ENCODE measurements at regions of chr3 and their contacts with region 1.

Region 1: GRCh38 chr3:46488735-46489361 is 8.9 kb upstream of the RTP3 start:
- DNase-seq: peak; percentile 90
- H3K4me3 ChIP-seq: no peak overlapping the region
- H3K27ac ChIP-seq: no peak overlapping the region
- H3K4me1 ChIP-seq: peaks cover 0 to 8% (median 5%) of the 10 kb centered on the region in 4 donors
- H3K27me3 ChIP-seq: no peaks in the 10 kb centered on the region
- CTCF ChIP-seq: peak; percentile 82 to 98 (median 95)
- EP300 ChIP-seq: no peak
- POLR2A ChIP-seq: no peak

Region 2: GRCh38 chr3:45986303-45986982 is 502.4 kb before region 1 on chr3:
- intact Hi-C with region 1: no loop called
- DNase-seq: peak; percentile 85
- H3K4me3 ChIP-seq: no peak overlapping the region
- H3K27ac ChIP-seq: peak overlapping the region; percentile 84 to 98 (median 95)
- H3K4me1 ChIP-seq: peaks cover 0 to 88% (median 82%) of the 10 kb centered on the region in 4 donors
- H3K27me3 ChIP-seq: no peaks in the 10 kb centered on the region
- CTCF ChIP-seq: no peak
- EP300 ChIP-seq: peak in 1 of 4 donors; percentile 66
- POLR2A ChIP-seq: no peak

Region 3: GRCh38 chr3:46558184-46559043 is 69.6 kb after region 1 on chr3:
- intact Hi-C with region 1: loop called (anchors 5 kb)
- DNase-seq: peak; percentile 87
- H3K4me3 ChIP-seq: peak overlapping the region; percentile 18 to 51 (median 37)
- H3K27ac ChIP-seq: peak overlapping the region in 3 of 4 donors; percentile 45 to 76 (median 49)
- H3K4me1 ChIP-seq: peaks cover 0 to 14% (median 4%) of the 10 kb centered on the region in 4 donors
- H3K27me3 ChIP-seq: no peaks in the 10 kb centered on the region
- CTCF ChIP-seq: peak in 3 of 4 experiments; percentile 15 to 57 (median 43)
- EP300 ChIP-seq: no peak
- POLR2A ChIP-seq: no peak

Region 4: DNA sequence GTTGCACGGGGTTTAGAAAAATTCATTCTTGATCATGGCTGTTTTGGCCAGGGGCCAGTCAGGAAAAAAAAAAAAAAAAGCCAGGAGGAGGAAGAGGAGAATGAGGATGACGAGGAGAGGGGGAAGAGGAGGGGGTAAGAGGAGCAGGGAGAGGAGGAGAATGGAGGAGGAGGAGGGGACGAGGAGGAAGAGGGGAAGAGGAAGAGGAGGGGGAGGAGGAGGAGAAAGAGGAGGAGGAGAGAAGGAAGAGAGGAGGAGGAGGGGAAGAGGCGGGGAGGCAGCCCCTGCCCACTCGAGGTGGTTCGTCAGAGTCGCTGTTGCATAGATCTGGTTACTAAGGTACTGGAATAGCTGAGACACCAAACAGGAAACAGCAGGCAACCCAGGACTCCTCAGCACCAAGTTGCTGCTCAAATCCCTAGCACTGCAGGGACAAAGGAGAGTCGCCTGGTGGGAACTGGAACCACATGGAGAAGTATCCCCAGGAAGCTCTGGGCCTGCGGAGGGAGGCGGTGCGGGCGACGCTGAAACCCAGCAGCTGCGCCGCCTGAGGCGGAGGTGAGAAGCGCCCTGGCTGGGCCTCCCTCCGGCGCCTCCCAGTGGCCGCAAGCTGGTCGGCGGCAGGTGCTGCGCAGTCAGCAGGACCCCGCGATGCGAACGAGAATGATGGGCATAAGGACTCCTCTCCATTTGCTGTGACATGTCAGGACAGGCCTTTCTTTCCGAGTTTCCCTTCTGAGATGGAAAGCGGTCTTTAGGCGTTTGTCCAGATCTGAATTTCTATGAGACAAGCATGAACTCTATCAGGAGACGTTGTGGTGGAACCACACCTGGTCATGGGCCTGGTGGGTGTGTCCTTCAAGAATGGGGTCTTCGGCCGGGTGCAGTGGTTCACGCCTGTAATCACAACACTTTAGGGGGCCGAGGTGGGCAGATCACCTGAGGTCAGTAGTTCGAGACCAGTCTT is 141.0 kb after region 1 on chr3:
- intact Hi-C with region 1: loop called (anchors 2 kb)
- DNase-seq: peak; percentile 86
- H3K4me3 ChIP-seq: peak overlapping the region in 3 of 4 donors; percentile 32 to 41 (median 39)
- H3K27ac ChIP-seq: peak overlapping the region; percentile 46 to 64 (median 58)
- H3K4me1 ChIP-seq: peaks cover 0 to 15% (median 13%) of the 10 kb centered on the region in 4 donors
- H3K27me3 ChIP-seq: no peaks in the 10 kb centered on the region
- CTCF ChIP-seq: peak; percentile 88 to 97 (median 94)
- EP300 ChIP-seq: no peak
- POLR2A ChIP-seq: no peak